Activated CD4-positive, alpha-beta memory T cell treated with anti-CD3 and anti-CD28 coated beads, Interleukin-2, amount 10 ng/mL, durations not matched to agents 7 days and 5 days (primary cell): ENCODE measurements at regions of chr10 and their contacts with region 1.

Region 1: GRCh38 chr10:75202321-75203045 is 8.1 kb upstream of the VDAC2 start:
- DNase-seq: no peak
- H3K4me3 Mint-ChIP-seq: no peak overlapping the region
- H3K27ac Mint-ChIP-seq: no peak overlapping the region
- H3K4me1 Mint-ChIP-seq: peaks cover 9% of the 10 kb centered on the region
- H3K27me3 Mint-ChIP-seq: no peaks in the 10 kb centered on the region

Region 2: GRCh38 chr10:75187961-75188426 is 14.5 kb before region 1 on chr10:
- CTCF ChIA-PET with region 1: interaction called, 30 read pairs
- POLR2A ChIA-PET with region 1: interaction called, 3 read pairs
- DNase-seq: peak; percentile 74
- H3K4me3 Mint-ChIP-seq: no peak overlapping the region
- H3K27ac Mint-ChIP-seq: no peak overlapping the region
- H3K4me1 Mint-ChIP-seq: peaks cover 11% of the 10 kb centered on the region
- H3K27me3 Mint-ChIP-seq: no peaks in the 10 kb centered on the region